Activated CD4-positive, alpha-beta T cell treated with anti-CD3 and anti-CD28 coated beads for 36 hours (primary cell): ENCODE measurements at regions of chrX and their contacts with region 1.

Region 1: GRCh38 chrX:63913719-63914118 is 128.7 kb upstream of the ARHGEF9 start:
- DNase-seq: no peak
- ATAC-seq: no peak
- H3K4me3 Mint-ChIP-seq: no peak overlapping the region
- H3K27ac Mint-ChIP-seq: no peak overlapping the region
- H3K4me1 Mint-ChIP-seq: no peaks in the 10 kb centered on the region
- H3K27me3 Mint-ChIP-seq: no peaks in the 10 kb centered on the region

Region 2: DNA sequence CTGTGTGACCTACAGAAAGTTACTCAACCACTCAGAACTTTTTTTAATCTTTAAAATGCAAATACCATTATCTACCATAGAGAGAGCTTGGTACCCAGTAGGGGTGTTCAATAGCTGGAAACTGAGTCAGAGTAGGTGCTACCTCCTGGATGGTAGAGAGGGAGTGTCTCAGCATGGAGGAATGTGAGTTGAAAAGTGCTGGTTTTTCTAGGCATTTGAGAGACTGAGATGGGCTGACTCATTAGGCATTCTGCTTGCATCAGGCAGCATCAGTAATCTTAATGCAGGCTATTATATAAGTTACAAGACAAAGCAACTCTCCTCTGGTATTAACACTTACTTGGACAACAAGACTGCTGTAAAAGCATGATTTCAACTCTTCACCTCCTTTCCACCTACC is 57.8 kb before region 1 on chrX:
- CTCF ChIA-PET with region 1: no interaction called
- POLR2A ChIA-PET with region 1: no interaction called
- intact Hi-C with region 1: loop called in 1 of 2 experiments (anchors 10 kb)
- DNase-seq: no peak
- ATAC-seq: no peak
- H3K4me3 Mint-ChIP-seq: no peak overlapping the region
- H3K27ac Mint-ChIP-seq: no peak overlapping the region
- H3K4me1 Mint-ChIP-seq: no peaks in the 10 kb centered on the region
- H3K27me3 Mint-ChIP-seq: peaks cover 2% of the 10 kb centered on the region

Region 3: GRCh38 chrX:65866146-65866545 is 1952.4 kb after region 1 on chrX:
- CTCF ChIA-PET with region 1: no interaction called
- POLR2A ChIA-PET with region 1: no interaction called
- intact Hi-C with region 1: no loop called
- DNase-seq: peak; percentile 26
- ATAC-seq: peak; percentile 97
- H3K4me3 Mint-ChIP-seq: no peak overlapping the region
- H3K27ac Mint-ChIP-seq: no peak overlapping the region
- H3K4me1 Mint-ChIP-seq: peaks cover 27% of the 10 kb centered on the region
- H3K27me3 Mint-ChIP-seq: no peaks in the 10 kb centered on the region